ENCODE measurements at regions of chr5 and their contacts with region 1.

Region 1: GRCh38 chr5:39217365-39218281 is 1.7 kb downstream of the FYB1 start:
- DNase-seq: peak; percentile 71
- ATAC-seq: peak; percentile 79
- H3K4me3 ChIP-seq: no peak overlapping the region
- H3K27ac ChIP-seq: no peak overlapping the region
- H3K4me1 ChIP-seq: no peaks in the 10 kb centered on the region
- H3K27me3 ChIP-seq: no peaks in the 10 kb centered on the region
- CTCF ChIP-seq: peak; percentile 61 to 96 (median 95); a peak in 5 of 6 replicates
- POLR2A ChIP-seq: no peak
- RAD21 ChIP-seq: peak; percentile 79

Region 2: DNA sequence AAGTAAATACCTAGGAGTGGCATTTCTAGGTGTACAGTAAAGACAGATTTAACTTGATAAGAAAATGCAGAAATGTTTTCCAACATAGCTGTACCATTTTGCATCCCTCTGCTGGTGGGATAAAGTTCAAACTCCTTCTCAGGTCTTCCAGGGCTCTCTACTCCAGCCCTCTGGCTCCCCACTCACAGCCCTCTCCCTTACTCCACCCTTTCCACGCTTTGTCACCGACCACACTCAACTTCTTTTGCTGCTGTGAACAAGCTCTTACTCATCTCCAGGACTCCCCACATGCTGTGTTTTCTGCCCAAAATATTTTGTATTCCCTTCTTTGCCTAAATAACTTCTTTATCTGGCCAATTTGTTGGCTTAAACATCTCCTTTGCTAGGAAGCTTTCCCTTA is 462.4 kb before region 1 on chr5:
- CTCF ChIA-PET with region 1: no interaction called
- POLR2A ChIA-PET with region 1: no interaction called
- RAD21 ChIA-PET with region 1: no interaction called
- intact Hi-C with region 1: no loop called
- DNase-seq: no peak
- ATAC-seq: no peak
- H3K4me3 ChIP-seq: no peak overlapping the region
- H3K27ac ChIP-seq: no peak overlapping the region
- H3K4me1 ChIP-seq: no peaks in the 10 kb centered on the region
- H3K27me3 ChIP-seq: no peaks in the 10 kb centered on the region
- CTCF ChIP-seq: peak in 1 of 3 experiments; percentile 13; a peak in 1 of 6 replicates
- POLR2A ChIP-seq: no peak
- RAD21 ChIP-seq: no peak

Region 3: DNA sequence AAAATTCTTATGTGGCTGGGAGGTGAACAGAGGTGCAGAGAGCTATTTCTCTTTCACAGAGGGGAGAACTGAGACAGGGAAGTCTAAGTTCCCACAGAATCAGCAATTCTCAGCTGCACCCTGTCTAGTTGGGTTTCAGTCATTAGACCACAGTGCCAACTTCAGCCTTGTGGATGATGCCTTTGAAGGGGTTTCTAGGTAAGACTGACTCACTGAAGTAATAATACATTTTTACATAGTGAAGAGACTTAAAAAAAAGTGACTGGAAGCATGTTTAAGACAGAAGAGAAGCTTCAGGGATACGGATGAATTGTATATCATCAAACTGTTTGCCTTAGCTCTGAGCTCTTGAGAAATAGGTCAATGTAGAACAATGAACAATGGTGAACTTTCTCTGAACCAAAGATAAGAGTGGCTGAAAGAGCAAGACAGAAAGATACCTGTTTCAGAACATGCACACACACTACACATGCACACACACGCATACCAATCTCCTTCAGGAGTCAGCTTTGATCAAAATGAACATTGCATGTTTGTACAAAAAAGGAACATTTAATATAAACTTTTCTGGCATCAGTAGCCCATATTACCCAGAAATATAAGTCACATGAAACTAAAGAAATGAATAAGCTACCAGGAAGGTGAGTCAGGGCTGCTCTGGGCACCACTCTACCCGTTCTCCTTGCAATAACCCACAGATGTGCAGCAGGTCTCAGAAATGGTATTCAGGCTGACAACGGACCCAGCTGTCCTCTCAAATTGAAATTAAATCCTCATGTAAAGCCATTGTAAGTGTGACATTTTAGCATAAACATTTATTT is 14.3 kb after region 1 on chr5:
- CTCF ChIA-PET with region 1: interaction called, 20 read pairs
- POLR2A ChIA-PET with region 1: no interaction called
- RAD21 ChIA-PET with region 1: no interaction called
- intact Hi-C with region 1: no loop called
- DNase-seq: no peak
- ATAC-seq: peak; percentile 44; the same call in 1 of the 2 replicates
- H3K4me3 ChIP-seq: no peak overlapping the region
- H3K27ac ChIP-seq: no peak overlapping the region
- H3K4me1 ChIP-seq: peaks cover 0 to 8% of the 10 kb centered on the region in 2 experiments; a peak in 1 of 4 replicates
- H3K27me3 ChIP-seq: no peaks in the 10 kb centered on the region
- CTCF ChIP-seq: no peak
- POLR2A ChIP-seq: no peak
- RAD21 ChIP-seq: no peak

Region 4: GRCh38 chr5:39283231-39283818 is 65.7 kb after region 1 on chr5:
- CTCF ChIA-PET with region 1: no interaction called
- POLR2A ChIA-PET with region 1: no interaction called
- RAD21 ChIA-PET with region 1: no interaction called
- intact Hi-C with region 1: loop called (anchors 5 kb)
- DNase-seq: peak; percentile 12
- ATAC-seq: peak; percentile 81
- H3K4me3 ChIP-seq: no peak overlapping the region
- H3K27ac ChIP-seq: no peak overlapping the region
- H3K4me1 ChIP-seq: no peaks in the 10 kb centered on the region
- H3K27me3 ChIP-seq: no peaks in the 10 kb centered on the region
- CTCF ChIP-seq: peak; percentile 38 to 56 (median 43); a peak in 5 of 6 replicates
- POLR2A ChIP-seq: no peak
- RAD21 ChIP-seq: peak; percentile 61

Region 5: GRCh38 chr5:39376293-39376714 is 158.7 kb after region 1 on chr5:
- CTCF ChIA-PET with region 1: interaction called, 9 read pairs
- POLR2A ChIA-PET with region 1: no interaction called
- RAD21 ChIA-PET with region 1: interaction called, 4 to 5 read pairs
- intact Hi-C with region 1: loop called (anchors 5 kb)
- DNase-seq: peak; percentile 22
- ATAC-seq: peak; percentile 86
- H3K4me3 ChIP-seq: no peak overlapping the region
- H3K27ac ChIP-seq: no peak overlapping the region
- H3K4me1 ChIP-seq: no peaks in the 10 kb centered on the region
- H3K27me3 ChIP-seq: no peaks in the 10 kb centered on the region
- CTCF ChIP-seq: peak; percentile 69 to 86 (median 71); a peak in 5 of 6 replicates
- POLR2A ChIP-seq: no peak
- RAD21 ChIP-seq: peak; percentile 81

Region 6: DNA sequence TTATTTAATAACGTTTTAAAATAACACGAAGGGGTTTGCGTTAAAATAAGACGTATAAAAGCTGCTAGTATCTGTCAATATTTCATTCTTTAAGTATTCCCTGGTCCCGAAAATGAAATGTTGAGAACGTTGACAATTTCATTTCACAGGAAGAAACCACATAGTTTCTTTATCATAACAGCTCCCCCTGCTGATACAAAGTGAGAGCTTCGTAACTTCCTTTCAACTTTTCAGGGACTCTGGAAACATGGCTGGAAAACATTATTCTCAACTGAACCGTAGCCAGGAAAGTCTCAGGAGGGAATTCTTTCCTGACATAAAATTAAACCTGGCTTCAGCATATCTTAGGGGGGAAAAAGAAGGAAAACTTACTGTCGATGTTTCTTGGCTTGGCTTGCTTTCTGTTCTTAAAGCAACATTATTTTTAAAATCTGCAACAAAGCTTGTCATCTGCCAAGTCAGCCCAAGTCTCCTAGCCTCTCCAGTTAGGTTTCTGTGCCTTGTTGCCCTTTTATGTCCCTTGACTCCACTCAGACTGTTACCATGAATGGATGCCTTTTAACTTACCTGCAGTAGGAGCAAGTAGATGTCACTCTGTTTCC is 330.0 kb after region 1 on chr5:
- CTCF ChIA-PET with region 1: interaction called, 28 read pairs
- POLR2A ChIA-PET with region 1: no interaction called
- RAD21 ChIA-PET with region 1: interaction called in 1 of 2 experiments, 3 read pairs
- intact Hi-C with region 1: loop called (anchors 2 kb)
- DNase-seq: peak; percentile 43
- ATAC-seq: peak; percentile 73
- H3K4me3 ChIP-seq: no peak overlapping the region
- H3K27ac ChIP-seq: no peak overlapping the region
- H3K4me1 ChIP-seq: 0 out of 4 replicates have a peak, but pooled peaks cover 0 to 4% of the 10 kb centered on the region in 2 experiments
- H3K27me3 ChIP-seq: no peaks in the 10 kb centered on the region
- CTCF ChIP-seq: peak; percentile 72 to 75 (median 75); a peak in 5 of 6 replicates
- POLR2A ChIP-seq: no peak
- RAD21 ChIP-seq: peak; percentile 79

Region 7: GRCh38 chr5:39570403-39571027 is 352.9 kb after region 1 on chr5:
- CTCF ChIA-PET with region 1: interaction called, 11 read pairs
- POLR2A ChIA-PET with region 1: no interaction called
- RAD21 ChIA-PET with region 1: no interaction called
- intact Hi-C with region 1: loop called (anchors 2 kb)
- DNase-seq: peak; percentile 31
- ATAC-seq: peak; percentile 67
- H3K4me3 ChIP-seq: no peak overlapping the region
- H3K27ac ChIP-seq: no peak overlapping the region
- H3K4me1 ChIP-seq: no peaks in the 10 kb centered on the region
- H3K27me3 ChIP-seq: no peaks in the 10 kb centered on the region; the same call in 1 of the 2 replicates
- CTCF ChIP-seq: peak; percentile 52 to 77 (median 57); a peak in 5 of 6 replicates
- POLR2A ChIP-seq: no peak
- RAD21 ChIP-seq: peak; percentile 67

Region 8: DNA sequence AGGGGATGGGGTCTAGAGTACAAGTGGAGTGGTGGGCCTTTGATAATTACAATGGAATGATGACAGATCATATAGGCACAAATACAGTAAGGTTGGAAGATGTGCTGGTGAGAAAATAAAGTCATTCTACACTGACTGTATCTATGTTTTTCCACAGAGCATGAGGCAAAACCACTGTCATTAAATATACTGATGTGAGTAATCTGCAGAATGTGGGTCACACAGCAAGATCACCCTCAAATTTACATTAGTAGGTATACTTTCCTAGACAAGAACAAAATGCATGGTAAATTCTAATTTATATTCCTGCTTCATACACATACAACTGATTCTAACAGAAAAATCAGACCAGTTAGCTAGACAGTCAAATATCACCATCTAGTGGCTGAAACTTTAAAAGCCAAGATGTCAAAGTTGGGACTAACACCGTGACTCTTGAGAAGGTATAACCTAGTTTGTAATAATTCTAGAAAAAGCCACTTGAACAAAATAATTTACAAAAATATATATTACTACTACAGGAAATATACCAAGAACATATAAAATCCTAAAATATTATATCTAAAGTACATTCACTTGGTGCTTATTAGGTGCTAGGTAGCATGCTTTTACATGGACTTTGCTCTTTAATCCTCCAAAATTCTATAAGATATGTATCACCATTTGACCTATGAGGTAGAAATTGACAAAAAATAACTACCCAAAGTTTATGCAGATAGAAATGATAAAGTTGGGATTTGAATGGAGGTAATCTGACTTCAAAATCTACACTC is 1518.7 kb after region 1 on chr5:
- CTCF ChIA-PET with region 1: no interaction called
- POLR2A ChIA-PET with region 1: no interaction called
- RAD21 ChIA-PET with region 1: no interaction called
- intact Hi-C with region 1: loop called (anchors 10 kb)
- DNase-seq: peak; percentile 50
- ATAC-seq: peak; percentile 72
- H3K4me3 ChIP-seq: no peak overlapping the region
- H3K27ac ChIP-seq: no peak overlapping the region
- H3K4me1 ChIP-seq: peaks cover 0 to 17% of the 10 kb centered on the region in 2 experiments; a peak in 1 of 4 replicates
- H3K27me3 ChIP-seq: no peaks in the 10 kb centered on the region
- CTCF ChIP-seq: peak; percentile 44 to 75 (median 63); a peak in 5 of 6 replicates
- POLR2A ChIP-seq: no peak
- RAD21 ChIP-seq: peak; percentile 77